ENCODE measurements at regions of chr9 and their contacts with region 1.

Region 1: DNA sequence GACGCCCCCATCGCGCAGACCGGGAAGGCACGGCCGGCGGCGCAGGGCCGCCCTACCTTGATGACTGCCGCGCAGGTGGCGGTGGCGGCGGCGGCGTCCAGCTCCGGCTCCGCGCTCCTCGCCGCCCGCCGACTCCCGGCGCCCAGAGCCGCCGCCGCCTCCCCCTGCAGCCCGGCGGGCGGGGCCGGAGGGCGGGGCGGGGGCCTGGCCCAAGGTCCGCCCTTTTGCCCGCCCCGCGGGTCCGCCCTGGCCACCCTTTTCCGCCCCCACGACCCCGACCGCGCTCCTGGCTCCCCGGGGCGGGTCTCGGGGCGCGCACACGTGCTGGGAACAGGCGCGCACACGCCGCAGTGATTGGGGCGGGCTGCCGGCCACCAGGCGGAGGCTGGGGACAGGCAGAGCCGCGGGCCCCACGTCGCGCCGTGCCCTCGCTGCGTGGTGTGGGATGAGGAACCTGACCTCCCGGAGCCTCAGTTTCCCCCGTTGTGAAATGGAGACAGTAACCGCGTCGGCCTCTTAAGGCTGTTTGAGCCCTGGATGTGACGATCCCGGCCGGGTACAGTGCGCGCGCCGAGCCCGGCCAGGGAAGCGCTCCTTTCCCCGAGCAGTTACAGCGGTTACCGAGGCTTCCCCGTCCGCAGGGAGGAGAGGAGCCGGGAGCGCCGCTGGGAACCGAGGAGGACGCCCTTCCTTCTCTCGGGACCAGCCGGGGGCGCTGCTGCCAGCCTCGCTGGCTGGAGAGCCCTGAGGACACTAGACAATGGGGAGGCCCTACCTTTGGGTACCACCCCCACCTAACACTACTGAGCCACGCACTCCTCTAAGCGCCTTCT is at the start of gene CORO2A:
- DNase-seq: peak; percentile 89
- CTCF ChIP-seq: peak; percentile 33

Region 2: GRCh38 chr9:98207606-98208005 is 14.9 kb after region 1 on chr9:
- CTCF ChIA-PET with region 1: interaction called, 18 read pairs
- POLR2A ChIA-PET with region 1: no interaction called
- DNase-seq: no peak
- CTCF ChIP-seq: no peak

Region 3: DNA sequence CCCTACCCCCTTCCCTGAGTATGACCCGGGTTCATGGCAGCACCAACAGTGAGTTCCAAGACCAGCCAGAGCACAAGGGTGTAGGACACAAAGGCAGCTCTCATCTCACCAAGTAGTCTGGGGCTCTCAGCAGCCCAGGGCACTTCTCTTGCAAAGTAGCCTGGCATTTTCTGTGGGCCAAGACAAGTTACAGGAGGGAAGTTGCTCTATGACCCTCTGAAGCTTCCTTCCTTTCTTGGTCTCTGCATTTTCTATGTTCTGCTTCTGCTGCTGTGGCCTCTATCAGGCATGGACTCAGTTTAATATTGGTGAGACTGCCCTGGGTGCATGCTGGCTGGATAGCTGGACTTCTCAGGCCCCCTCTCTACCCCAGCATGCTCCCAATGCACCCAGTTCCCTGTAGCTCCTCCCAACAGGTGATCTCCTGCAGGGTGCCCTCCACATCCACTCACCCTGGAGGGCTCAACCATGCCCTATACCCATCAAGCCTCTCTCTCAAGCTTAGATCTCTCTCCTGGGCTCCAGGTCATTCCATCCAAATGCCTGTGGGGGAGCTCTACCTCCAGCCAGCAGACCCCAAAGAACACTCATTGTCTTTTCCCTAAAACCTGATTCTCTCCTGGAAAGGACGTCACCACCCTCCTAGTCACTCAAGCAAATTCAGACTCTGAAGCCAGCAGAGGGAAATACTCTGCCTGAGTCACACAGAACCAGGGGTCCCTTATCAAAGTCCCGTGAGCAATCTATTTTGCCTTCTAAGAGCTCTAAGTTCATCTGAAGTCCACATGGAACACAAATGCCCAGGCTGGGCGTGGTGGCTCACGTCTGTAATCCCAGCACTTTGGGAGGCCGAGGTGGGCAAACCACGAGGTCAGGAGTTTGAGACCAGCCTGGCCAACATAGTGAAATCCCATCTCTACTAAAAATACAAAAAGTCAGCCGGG is 48.9 kb after region 1 on chr9:
- CTCF ChIA-PET with region 1: no interaction called
- POLR2A ChIA-PET with region 1: no interaction called
- DNase-seq: no peak
- CTCF ChIP-seq: no peak

Measured in GM10248 (cell line).